T-cell (primary cell): ENCODE measurements at regions of chr3 and their contacts with region 1.

Region 1: GRCh38 chr3:16589867-16590624 is 15.2 kb downstream of the DAZL start:
- DNase-seq: no peak
- ATAC-seq: no peak
- H3K4me3 ChIP-seq: no peak overlapping the region
- H3K4me3 Mint-ChIP-seq: no peak overlapping the region
- H3K27ac ChIP-seq: no peak overlapping the region
- H3K27ac Mint-ChIP-seq: no peak overlapping the region
- H3K4me1 ChIP-seq: no peaks in the 10 kb centered on the region
- H3K4me1 Mint-ChIP-seq: peaks cover 0 to 7% (median 3%) of the 10 kb centered on the region in 3 donors
- H3K27me3 ChIP-seq: no peaks in the 10 kb centered on the region
- H3K27me3 Mint-ChIP-seq: peaks cover 0 to 3% of the 10 kb centered on the region in 2 donors

Region 2: GRCh38 chr3:16264708-16265454 is 325.2 kb before region 1 on chr3 and contains the starts of genes DPH3 and OXNAD1:
- CTCF ChIA-PET with region 1: no interaction called
- POLR2A ChIA-PET with region 1: no interaction called
- DNase-seq: peak; percentile 95 to 100 (median 98)
- ATAC-seq: peak; percentile 96 to 98 (median 97)
- H3K4me3 ChIP-seq: peak within 1 kb of the TSS; percentile 84 to 93
- H3K4me3 Mint-ChIP-seq: peak within 1 kb of the TSS; percentile 94 to 97 (median 95)
- H3K27ac ChIP-seq: peak within 1 kb of the TSS; percentile 84
- H3K27ac Mint-ChIP-seq: peak within 1 kb of the TSS; percentile 97 to 99
- H3K4me1 ChIP-seq: peaks cover 15 to 17% of the 10 kb centered on the region in 2 experiments
- H3K4me1 Mint-ChIP-seq: peaks cover 39 to 45% (median 44%) of the 10 kb centered on the region in 3 donors
- H3K27me3 ChIP-seq: no peaks in the 10 kb centered on the region
- H3K27me3 Mint-ChIP-seq: no peaks in the 10 kb centered on the region
- total RNA-seq, gene DPH3: 13.1 to 19.0 (median 14.4) TPM
- total RNA-seq, gene OXNAD1: 78.5 to 218 (median 101) TPM

Region 3: GRCh38 chr3:16546186-16547010 is 43.6 kb before region 1 on chr3:
- CTCF ChIA-PET with region 1: no interaction called
- POLR2A ChIA-PET with region 1: no interaction called
- DNase-seq: no peak
- ATAC-seq: no peak
- H3K4me3 ChIP-seq: no peak overlapping the region
- H3K4me3 Mint-ChIP-seq: no peak overlapping the region
- H3K27ac ChIP-seq: no peak overlapping the region
- H3K27ac Mint-ChIP-seq: no peak overlapping the region
- H3K4me1 ChIP-seq: peaks cover 2 to 9% of the 10 kb centered on the region in 2 experiments
- H3K4me1 Mint-ChIP-seq: peaks cover 6 to 9% (median 6%) of the 10 kb centered on the region in 3 donors
- H3K27me3 ChIP-seq: no peaks in the 10 kb centered on the region
- H3K27me3 Mint-ChIP-seq: peaks cover 0 to 3% of the 10 kb centered on the region in 2 donors

Region 4: DNA sequence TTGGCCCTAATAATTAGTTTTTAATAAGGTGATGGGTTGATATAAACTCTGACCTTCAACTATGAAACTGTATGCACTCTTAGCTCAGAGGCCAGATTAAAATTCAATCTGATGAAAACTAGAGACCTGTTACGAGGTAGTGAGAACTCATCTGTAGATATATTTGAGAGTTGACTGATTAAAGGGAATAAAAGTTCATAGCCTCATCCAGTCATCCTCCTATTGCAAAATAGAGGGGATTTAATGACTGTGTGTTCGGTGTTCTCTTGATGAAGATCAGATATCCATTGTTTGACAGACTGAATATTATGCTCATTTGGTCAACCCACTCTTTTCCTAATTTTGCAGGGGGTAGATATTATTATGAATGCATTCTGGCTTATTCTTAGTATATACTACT is 271.4 kb after region 1 on chr3:
- CTCF ChIA-PET with region 1: interaction called in 1 of 2 experiments, 11 read pairs
- POLR2A ChIA-PET with region 1: no interaction called
- DNase-seq: no peak
- ATAC-seq: no peak
- H3K4me3 ChIP-seq: no peak overlapping the region
- H3K4me3 Mint-ChIP-seq: no peak overlapping the region
- H3K27ac ChIP-seq: no peak overlapping the region
- H3K27ac Mint-ChIP-seq: no peak overlapping the region
- H3K4me1 ChIP-seq: peaks cover 2% of the 10 kb centered on the region in 2 experiments
- H3K4me1 Mint-ChIP-seq: peaks cover 5 to 10% (median 7%) of the 10 kb centered on the region in 3 donors
- H3K27me3 ChIP-seq: no peaks in the 10 kb centered on the region
- H3K27me3 Mint-ChIP-seq: no peaks in the 10 kb centered on the region